IMR-90 (cell line): ENCODE measurements at regions of chr3 and their contacts with region 1.

Region 1: DNA sequence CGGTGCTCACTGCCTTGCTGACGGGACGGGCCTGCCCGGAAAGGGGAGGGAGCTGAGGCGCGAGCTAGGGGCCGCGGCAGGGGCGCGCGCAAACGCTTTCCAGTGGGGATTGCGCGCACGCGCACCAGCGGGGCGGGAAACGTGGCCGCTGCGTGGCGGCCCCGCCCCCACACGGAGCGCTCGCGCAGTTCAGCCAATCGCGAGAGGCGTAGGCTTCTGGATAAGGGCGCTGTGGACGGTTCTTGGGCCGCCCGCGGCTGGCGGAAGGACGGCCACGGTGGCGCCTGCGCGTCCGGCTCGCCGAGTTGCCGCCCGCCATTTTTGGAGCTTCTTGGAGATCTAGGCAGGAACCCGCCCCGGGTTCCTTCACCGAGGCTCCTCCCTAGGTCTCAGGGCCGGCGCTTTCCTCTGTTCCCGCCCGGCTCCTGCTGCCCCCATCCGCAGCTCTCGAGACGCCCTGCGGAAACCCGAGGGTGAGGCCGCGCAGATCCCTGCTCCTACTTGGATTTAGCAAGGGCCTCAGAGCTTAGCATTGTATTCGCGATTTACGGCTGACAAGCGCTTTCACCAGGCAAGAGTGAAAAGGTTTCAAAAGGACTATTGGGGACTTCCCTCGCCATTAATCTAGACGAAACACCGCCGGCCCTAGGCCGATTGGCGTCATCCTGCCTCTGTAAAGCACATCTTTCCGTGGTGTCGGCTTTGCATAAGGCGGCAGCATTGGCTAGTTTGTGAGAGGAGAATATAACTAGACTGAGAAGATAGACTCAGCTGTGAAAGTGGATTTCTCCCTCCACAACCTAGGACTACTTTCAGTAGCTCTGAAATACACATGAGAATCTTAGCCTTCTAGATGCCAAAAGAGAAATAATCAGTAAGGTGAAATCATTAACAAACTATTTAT is 496 bp upstream of the STAG1 start:
- DNase-seq: peak; percentile 98
- ATAC-seq: peak; percentile 91
- H3K4me3 ChIP-seq: peak overlapping the region; percentile 77
- H3K27ac ChIP-seq: peak overlapping the region; percentile 99
- H3K4me1 ChIP-seq: peaks cover 3% of the 10 kb centered on the region
- H3K27me3 ChIP-seq: no peaks in the 10 kb centered on the region
- CTCF ChIP-seq: peak; percentile 37
- POLR2A ChIP-seq: peak; percentile 77; the same call in 1 of the 2 replicates
- RAD21 ChIP-seq: peak; percentile 35; the same call in 1 of the 2 replicates

Region 2: GRCh38 chr3:136305878-136306277 is 446.8 kb before region 1 on chr3:
- CTCF ChIA-PET with region 1: interaction called, 30 read pairs
- POLR2A ChIA-PET with region 1: interaction called, 3 read pairs
- dilution Hi-C with region 1: no loop called
- in situ Hi-C with region 1: loop called (anchors 10 kb)
- intact Hi-C with region 1: loop called (anchors 1 kb)
- DNase-seq: peak; percentile 70
- ATAC-seq: peak; percentile 92
- H3K4me3 ChIP-seq: no peak overlapping the region
- H3K27ac ChIP-seq: no peak overlapping the region
- H3K4me1 ChIP-seq: no peaks in the 10 kb centered on the region
- H3K27me3 ChIP-seq: no peaks in the 10 kb centered on the region
- CTCF ChIP-seq: peak; percentile 87
- POLR2A ChIP-seq: no peak
- RAD21 ChIP-seq: peak; percentile 88

Region 3: GRCh38 chr3:136396916-136397315 is 355.8 kb before region 1 on chr3:
- CTCF ChIA-PET with region 1: interaction called, 20 read pairs
- POLR2A ChIA-PET with region 1: interaction called, 9 read pairs
- dilution Hi-C with region 1: no loop called
- in situ Hi-C with region 1: loop called (anchors 10 kb)
- intact Hi-C with region 1: no loop called
- DNase-seq: peak; percentile 73
- ATAC-seq: peak; percentile 81
- H3K4me3 ChIP-seq: no peak overlapping the region
- H3K27ac ChIP-seq: peak overlapping the region; percentile 93; the same call in 1 of the 2 replicates
- H3K4me1 ChIP-seq: peaks cover 8% of the 10 kb centered on the region
- H3K27me3 ChIP-seq: no peaks in the 10 kb centered on the region
- CTCF ChIP-seq: no peak
- POLR2A ChIP-seq: no peak
- RAD21 ChIP-seq: no peak

Region 4: DNA sequence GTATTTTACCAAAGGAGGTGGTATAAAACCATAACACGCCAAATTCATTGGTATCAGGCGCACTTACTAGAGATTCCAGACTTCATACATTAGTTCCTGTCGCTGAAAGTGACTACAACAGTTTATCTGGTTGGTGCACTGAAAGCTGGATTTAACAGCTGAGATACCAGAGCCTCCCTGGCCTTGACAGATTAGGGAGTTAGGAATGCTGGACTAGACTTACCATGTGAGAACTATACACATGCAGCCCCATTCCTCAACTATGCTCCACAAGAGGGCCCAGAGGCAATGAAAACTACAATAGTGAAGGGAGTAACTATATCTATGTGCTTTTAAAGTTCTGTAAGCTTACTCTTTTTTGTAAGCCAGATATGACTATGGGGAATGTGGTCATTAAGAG is 174.9 kb before region 1 on chr3:
- CTCF ChIA-PET with region 1: interaction called, 10 read pairs
- POLR2A ChIA-PET with region 1: no interaction called
- dilution Hi-C with region 1: no loop called
- in situ Hi-C with region 1: no loop called
- intact Hi-C with region 1: no loop called
- DNase-seq: no peak
- ATAC-seq: no peak
- H3K4me3 ChIP-seq: no peak overlapping the region
- H3K27ac ChIP-seq: no peak overlapping the region
- H3K4me1 ChIP-seq: no peaks in the 10 kb centered on the region; the same call in 1 of the 2 replicates
- H3K27me3 ChIP-seq: no peaks in the 10 kb centered on the region
- CTCF ChIP-seq: no peak
- POLR2A ChIP-seq: no peak
- RAD21 ChIP-seq: no peak

Region 5: DNA sequence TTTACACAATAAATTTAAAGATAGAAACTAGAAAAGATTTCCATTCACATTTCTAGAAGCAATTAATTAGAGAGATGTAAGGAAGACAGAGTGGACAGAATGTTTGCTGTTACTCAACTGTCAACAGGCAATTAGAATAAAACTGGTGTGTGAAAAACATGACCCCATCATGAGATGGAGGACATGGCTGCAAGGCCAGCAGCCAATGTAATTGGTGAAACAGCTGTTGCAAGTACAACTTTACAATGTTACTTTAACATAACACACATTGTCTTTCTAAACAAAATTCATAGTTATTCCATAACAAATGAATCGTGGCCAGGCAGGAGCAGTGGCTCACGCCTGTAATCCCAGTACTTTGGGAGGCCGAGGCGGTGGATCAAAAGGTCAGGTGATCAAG is 28.1 kb after region 1 on chr3:
- CTCF ChIA-PET with region 1: no interaction called
- POLR2A ChIA-PET with region 1: no interaction called
- dilution Hi-C with region 1: no loop called
- in situ Hi-C with region 1: no loop called
- intact Hi-C with region 1: no loop called
- DNase-seq: no peak
- ATAC-seq: no peak
- H3K4me3 ChIP-seq: no peak overlapping the region
- H3K27ac ChIP-seq: no peak overlapping the region
- H3K4me1 ChIP-seq: peaks cover 10% of the 10 kb centered on the region
- H3K27me3 ChIP-seq: no peaks in the 10 kb centered on the region
- CTCF ChIP-seq: no peak
- POLR2A ChIP-seq: no peak
- RAD21 ChIP-seq: no peak

Region 6: GRCh38 chr3:136861890-136862616 is 109.4 kb after region 1 on chr3 and contains the start of gene NCK1:
- CTCF ChIA-PET with region 1: interaction called, 4 read pairs
- POLR2A ChIA-PET with region 1: interaction called, 6 read pairs
- dilution Hi-C with region 1: no loop called
- in situ Hi-C with region 1: no loop called
- intact Hi-C with region 1: loop called (anchors 2 kb)
- DNase-seq: peak; percentile 98
- ATAC-seq: peak; percentile 98
- H3K4me3 ChIP-seq: peak within 1 kb of the TSS; percentile 85
- H3K27ac ChIP-seq: peak within 1 kb of the TSS; percentile 94
- H3K4me1 ChIP-seq: peaks cover 6% of the 10 kb centered on the region
- H3K27me3 ChIP-seq: no peaks in the 10 kb centered on the region
- CTCF ChIP-seq: 0 out of 2 replicates have a peak, but pooled peaks have one; percentile 3
- POLR2A ChIP-seq: peak; percentile 81
- RAD21 ChIP-seq: no peak
- total RNA-seq, gene NCK1: 23.7 and 50.3 TPM in 2 replicates